ENCODE measurements at regions of chr16 and their contacts with region 1.

Region 1: GRCh38 chr16:17301593-17302135 is 169.1 kb downstream of the XYLT1 start:
- DNase-seq: peak; percentile 95
- ATAC-seq: peak; percentile 88
- H3K4me3 ChIP-seq: peak overlapping the region in 1 of 5 experiments; percentile 9
- H3K4me3 Mint-ChIP-seq: peak overlapping the region; percentile 48
- H3K27ac ChIP-seq: peak overlapping the region; percentile 83 to 89
- H3K27ac Mint-ChIP-seq: peak overlapping the region; percentile 91
- H3K4me1 ChIP-seq: peaks cover 62 to 77% of the 10 kb centered on the region in 2 donors
- H3K4me1 Mint-ChIP-seq: peaks cover 71% of the 10 kb centered on the region
- H3K27me3 ChIP-seq: no peaks in the 10 kb centered on the region
- H3K27me3 Mint-ChIP-seq: no peaks in the 10 kb centered on the region
- CTCF ChIP-seq: no peak

Region 2: DNA sequence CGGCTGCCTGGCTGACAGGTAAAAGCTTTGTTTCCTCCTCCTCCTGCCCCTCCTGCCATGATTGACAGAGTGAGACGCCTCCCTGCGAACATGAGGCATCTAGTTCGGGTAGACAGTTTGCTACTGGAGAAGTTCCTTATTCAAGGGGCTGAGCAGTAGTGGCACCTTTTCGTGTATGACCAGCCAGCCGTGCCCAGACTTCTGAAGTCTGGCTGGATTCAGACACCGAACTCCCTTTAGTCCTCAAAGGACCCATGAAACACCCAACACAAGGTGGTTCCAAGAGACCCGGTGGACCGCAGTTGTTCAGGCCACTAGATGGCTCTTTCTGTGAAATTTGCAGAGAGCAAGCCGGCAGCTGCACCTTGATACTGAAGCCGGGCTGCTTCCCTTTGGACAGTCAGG is 23.7 kb before region 1 on chr16:
- CTCF ChIA-PET with region 1: interaction called, 33 read pairs
- POLR2A ChIA-PET with region 1: interaction called, 3 read pairs
- intact Hi-C with region 1: no loop called
- DNase-seq: peak; percentile 69
- ATAC-seq: peak; percentile 60
- H3K4me3 ChIP-seq: peak overlapping the region in 1 of 5 experiments; percentile 20
- H3K4me3 Mint-ChIP-seq: peak overlapping the region; percentile 35
- H3K27ac ChIP-seq: no peak overlapping the region
- H3K27ac Mint-ChIP-seq: no peak overlapping the region
- H3K4me1 ChIP-seq: peaks cover 59 to 60% of the 10 kb centered on the region in 2 donors
- H3K4me1 Mint-ChIP-seq: peaks cover 77% of the 10 kb centered on the region
- H3K27me3 ChIP-seq: no peaks in the 10 kb centered on the region
- H3K27me3 Mint-ChIP-seq: no peaks in the 10 kb centered on the region
- CTCF ChIP-seq: peak; percentile 53

Region 3: GRCh38 chr16:17364319-17365210 is 62.9 kb after region 1 on chr16:
- CTCF ChIA-PET with region 1: interaction called, 48 read pairs
- POLR2A ChIA-PET with region 1: interaction called, 26 read pairs
- intact Hi-C with region 1: loop called (anchors 1 kb)
- DNase-seq: peak; percentile 58
- ATAC-seq: no peak
- H3K4me3 ChIP-seq: no peak overlapping the region
- H3K4me3 Mint-ChIP-seq: peak overlapping the region; percentile 40
- H3K27ac ChIP-seq: peak overlapping the region; percentile 18 to 93
- H3K27ac Mint-ChIP-seq: peak overlapping the region; percentile 23
- H3K4me1 ChIP-seq: peaks cover 99 to 100% of the 10 kb centered on the region in 2 donors
- H3K4me1 Mint-ChIP-seq: peaks cover 93% of the 10 kb centered on the region
- H3K27me3 ChIP-seq: no peaks in the 10 kb centered on the region
- H3K27me3 Mint-ChIP-seq: no peaks in the 10 kb centered on the region
- CTCF ChIP-seq: no peak

Region 4: GRCh38 chr16:17377360-17378324 is 76.0 kb after region 1 on chr16:
- CTCF ChIA-PET with region 1: interaction called, 48 read pairs
- POLR2A ChIA-PET with region 1: interaction called, 7 read pairs
- intact Hi-C with region 1: loop called (anchors 1 kb)
- DNase-seq: peak; percentile 90
- ATAC-seq: peak; percentile 90
- H3K4me3 ChIP-seq: peak overlapping the region in 2 of 5 experiments; percentile 27 to 30
- H3K4me3 Mint-ChIP-seq: peak overlapping the region; percentile 66
- H3K27ac ChIP-seq: peak overlapping the region; percentile 84 to 89
- H3K27ac Mint-ChIP-seq: peak overlapping the region; percentile 77
- H3K4me1 ChIP-seq: peaks cover 61 to 81% of the 10 kb centered on the region in 2 donors
- H3K4me1 Mint-ChIP-seq: peaks cover 72% of the 10 kb centered on the region
- H3K27me3 ChIP-seq: no peaks in the 10 kb centered on the region
- H3K27me3 Mint-ChIP-seq: no peaks in the 10 kb centered on the region
- CTCF ChIP-seq: no peak

Region 5: GRCh38 chr16:17424771-17425170 is 123.1 kb after region 1 on chr16:
- CTCF ChIA-PET with region 1: no interaction called
- POLR2A ChIA-PET with region 1: interaction called, 11 read pairs
- intact Hi-C with region 1: no loop called
- DNase-seq: no peak
- ATAC-seq: no peak
- H3K4me3 ChIP-seq: no peak overlapping the region
- H3K4me3 Mint-ChIP-seq: no peak overlapping the region
- H3K27ac ChIP-seq: no peak overlapping the region
- H3K27ac Mint-ChIP-seq: no peak overlapping the region
- H3K4me1 ChIP-seq: peaks cover 0 to 4% of the 10 kb centered on the region in 2 donors
- H3K4me1 Mint-ChIP-seq: peaks cover 27% of the 10 kb centered on the region
- H3K27me3 ChIP-seq: no peaks in the 10 kb centered on the region
- H3K27me3 Mint-ChIP-seq: no peaks in the 10 kb centered on the region
- CTCF ChIP-seq: no peak

Region 6: DNA sequence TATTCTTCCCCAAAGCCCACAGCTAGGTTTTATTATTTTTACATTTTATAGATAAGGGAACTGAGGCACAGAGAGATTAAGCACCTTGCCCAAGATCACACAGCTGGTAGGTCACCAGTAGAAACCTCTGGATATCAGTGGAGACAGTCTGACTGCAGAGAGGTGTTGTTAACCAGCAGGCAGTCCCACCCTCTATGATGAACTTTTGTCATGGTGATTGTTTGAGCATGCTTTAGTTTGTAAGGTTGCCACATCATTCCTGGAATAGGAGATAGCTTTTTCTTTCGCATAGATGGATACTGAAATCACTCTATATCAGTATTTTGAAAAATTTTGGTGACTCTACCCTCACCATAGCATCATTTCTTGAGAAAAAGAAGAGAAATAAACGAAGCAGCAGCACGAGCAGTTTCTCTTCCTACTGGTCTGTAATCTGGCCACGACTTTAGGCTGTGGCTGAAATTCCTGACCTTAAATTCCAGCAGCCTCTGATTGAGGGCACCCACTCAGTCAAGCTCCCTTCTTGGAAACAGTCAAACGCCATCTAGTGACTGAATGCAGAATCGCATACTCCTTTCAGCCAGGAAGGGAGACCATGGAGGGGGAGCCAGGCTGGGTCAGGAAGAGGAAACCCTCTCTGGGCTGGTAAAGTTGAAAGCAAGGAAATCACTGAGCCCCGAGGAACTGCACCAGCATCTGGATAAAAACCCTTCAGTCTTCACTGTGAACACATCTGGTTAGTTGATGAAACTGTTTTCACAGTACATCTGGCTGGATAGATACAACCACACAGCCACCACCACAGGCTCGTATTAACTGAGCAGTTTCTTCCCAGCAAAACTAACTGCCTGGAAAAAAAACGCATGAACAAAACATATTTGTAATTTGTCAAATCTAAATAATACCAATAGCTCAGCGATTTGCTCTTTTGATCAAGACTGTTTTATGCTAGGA is 277.5 kb after region 1 on chr16:
- CTCF ChIA-PET with region 1: interaction called, 14 read pairs
- POLR2A ChIA-PET with region 1: no interaction called
- intact Hi-C with region 1: no loop called
- DNase-seq: peak; percentile 76
- ATAC-seq: peak; percentile 61
- H3K4me3 ChIP-seq: no peak overlapping the region
- H3K4me3 Mint-ChIP-seq: no peak overlapping the region
- H3K27ac ChIP-seq: no peak overlapping the region
- H3K27ac Mint-ChIP-seq: no peak overlapping the region
- H3K4me1 ChIP-seq: peaks cover 0 to 3% of the 10 kb centered on the region in 2 donors
- H3K4me1 Mint-ChIP-seq: peaks cover 4% of the 10 kb centered on the region
- H3K27me3 ChIP-seq: peaks cover 0 to 4% (median 0%) of the 10 kb centered on the region in 4 experiments
- H3K27me3 Mint-ChIP-seq: no peaks in the 10 kb centered on the region
- CTCF ChIP-seq: peak; percentile 89

Region 7: GRCh38 chr16:17598968-17599367 is 297.3 kb after region 1 on chr16:
- CTCF ChIA-PET with region 1: no interaction called
- POLR2A ChIA-PET with region 1: no interaction called
- intact Hi-C with region 1: no loop called
- DNase-seq: no peak
- ATAC-seq: no peak
- H3K4me3 ChIP-seq: no peak overlapping the region
- H3K4me3 Mint-ChIP-seq: no peak overlapping the region
- H3K27ac ChIP-seq: no peak overlapping the region
- H3K27ac Mint-ChIP-seq: no peak overlapping the region
- H3K4me1 ChIP-seq: no peaks in the 10 kb centered on the region
- H3K4me1 Mint-ChIP-seq: no peaks in the 10 kb centered on the region
- H3K27me3 ChIP-seq: no peaks in the 10 kb centered on the region
- H3K27me3 Mint-ChIP-seq: peaks cover 38% of the 10 kb centered on the region
- CTCF ChIP-seq: no peak